Right cardiac atrium (tissue), 5 donors: ENCODE measurements at regions of chr7 and their contacts with region 1.

Region 1: GRCh38 chr7:11212080-11212711 is 238.5 kb downstream of the PHF14 start:
- DNase-seq: no peak
- ATAC-seq: peak; percentile 63 to 76
- H3K4me3 ChIP-seq: no peak overlapping the region
- H3K27ac ChIP-seq: no peak overlapping the region
- H3K4me1 ChIP-seq: peaks cover 3% of the 10 kb centered on the region
- H3K27me3 ChIP-seq: no peaks in the 10 kb centered on the region

Region 2: GRCh38 chr7:11153694-11154093 is 58.5 kb before region 1 on chr7:
- intact Hi-C with region 1: loop called in 1 of 4 experiments (anchors 10 kb)
- DNase-seq: no peak
- ATAC-seq: no peak
- H3K4me3 ChIP-seq: no peak overlapping the region
- H3K27ac ChIP-seq: no peak overlapping the region
- H3K4me1 ChIP-seq: no peaks in the 10 kb centered on the region
- H3K27me3 ChIP-seq: no peaks in the 10 kb centered on the region

Region 3: DNA sequence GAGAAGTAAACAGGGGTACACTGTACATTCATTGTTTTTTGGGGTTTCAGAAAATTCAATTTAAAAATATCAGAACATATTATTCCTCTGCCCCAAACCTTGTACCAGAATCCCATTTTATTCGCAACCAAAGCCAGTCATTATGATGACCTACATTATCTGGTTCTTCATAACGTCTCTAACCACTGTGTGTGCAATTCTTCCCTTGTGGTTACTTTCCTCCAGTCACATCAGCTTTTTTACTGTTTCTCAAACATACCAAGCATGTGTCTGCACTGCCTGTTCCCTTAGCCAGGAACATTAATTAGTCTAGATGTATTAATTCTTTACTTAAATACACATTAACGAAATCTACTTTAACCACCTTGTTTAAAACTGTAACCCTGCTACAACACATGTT is 555.0 kb after region 1 on chr7:
- intact Hi-C with region 1: no loop called
- DNase-seq: no peak
- ATAC-seq: no peak
- H3K4me3 ChIP-seq: no peak overlapping the region
- H3K27ac ChIP-seq: no peak overlapping the region
- H3K4me1 ChIP-seq: no peaks in the 10 kb centered on the region
- H3K27me3 ChIP-seq: no peaks in the 10 kb centered on the region